ENCODE measurements at regions of chr19 and their contacts with region 1.

Region 1: DNA sequence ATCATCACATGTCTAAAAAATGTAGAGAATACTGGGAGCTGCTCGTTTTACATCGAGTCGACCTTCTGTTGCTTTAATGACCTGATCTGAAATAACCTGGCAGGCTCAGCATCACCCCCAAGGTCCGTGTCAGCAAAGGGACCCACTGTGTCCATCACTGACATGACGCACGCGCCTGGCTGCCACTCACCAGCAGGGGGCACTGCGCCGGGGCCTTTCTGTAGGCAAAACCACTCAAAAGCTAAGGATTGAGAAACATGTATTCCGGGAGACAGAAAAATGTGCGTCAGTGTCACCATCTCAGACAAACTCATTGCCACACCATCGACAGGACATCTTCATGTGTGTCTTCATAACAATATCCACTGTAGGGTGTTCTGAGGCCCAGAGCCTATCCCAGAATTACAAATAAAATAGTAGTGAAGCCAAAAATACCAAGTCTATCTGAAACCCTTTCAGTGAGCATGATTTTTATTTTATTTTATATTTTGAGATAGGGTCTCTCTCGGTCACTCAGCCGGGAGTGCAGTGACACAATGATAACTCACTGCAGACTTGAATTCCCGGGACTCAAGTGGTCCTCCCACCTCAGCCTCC is 130.3 kb upstream of the LSM14A start:
- DNase-seq: peak; percentile 72
- H3K4me3 ChIP-seq: no peak overlapping the region
- H3K27ac ChIP-seq: no peak overlapping the region
- H3K4me1 ChIP-seq: no peaks in the 10 kb centered on the region
- H3K27me3 ChIP-seq: peaks cover 0 to 3% of the 10 kb centered on the region in 2 donors
- CTCF ChIP-seq: peak; percentile 61 to 69

Region 2: GRCh38 chr19:33720691-33721682 is 321.0 kb before region 1 on chr19:
- intact Hi-C with region 1: no loop called
- DNase-seq: no peak
- H3K4me3 ChIP-seq: no peak overlapping the region
- H3K27ac ChIP-seq: no peak overlapping the region
- H3K4me1 ChIP-seq: no peaks in the 10 kb centered on the region
- H3K27me3 ChIP-seq: peaks cover 0 to 19% of the 10 kb centered on the region in 2 donors
- CTCF ChIP-seq: no peak

Region 3: GRCh38 chr19:33927789-33928457 is 114.1 kb before region 1 on chr19:
- intact Hi-C with region 1: no loop called
- DNase-seq: no peak
- H3K4me3 ChIP-seq: no peak overlapping the region
- H3K27ac ChIP-seq: no peak overlapping the region
- H3K4me1 ChIP-seq: no peaks in the 10 kb centered on the region
- H3K27me3 ChIP-seq: peaks cover 0 to 3% of the 10 kb centered on the region in 2 donors
- CTCF ChIP-seq: no peak

Region 4: GRCh38 chr19:34145741-34146202 is 103.7 kb after region 1 on chr19:
- intact Hi-C with region 1: loop called (anchors 5 kb)
- DNase-seq: peak in 1 of 2 donors; percentile 33
- H3K4me3 ChIP-seq: no peak overlapping the region
- H3K27ac ChIP-seq: no peak overlapping the region
- H3K4me1 ChIP-seq: no peaks in the 10 kb centered on the region
- H3K27me3 ChIP-seq: no peaks in the 10 kb centered on the region
- CTCF ChIP-seq: peak; percentile 76 to 78

Region 5: GRCh38 chr19:34288381-34288780 is 246.4 kb after region 1 on chr19:
- intact Hi-C with region 1: no loop called
- DNase-seq: no peak
- H3K4me3 ChIP-seq: no peak overlapping the region
- H3K27ac ChIP-seq: no peak overlapping the region
- H3K4me1 ChIP-seq: peaks cover 0 to 28% (median 3%) of the 10 kb centered on the region in 4 donors
- H3K27me3 ChIP-seq: no peaks in the 10 kb centered on the region
- CTCF ChIP-seq: no peak